Esophagus muscularis mucosa (tissue), 4 donors: ENCODE measurements at regions of chr5 and their contacts with region 1.

Region 1: GRCh38 chr5:139517683-139518564 is 35.4 kb upstream of the STING1 start:
- DNase-seq: peak; percentile 97
- H3K4me3 ChIP-seq: peak overlapping the region; percentile 51 to 67 (median 60)
- H3K27ac ChIP-seq: peak overlapping the region; percentile 84 to 87 (median 84)
- H3K4me1 ChIP-seq: peaks cover 7 to 21% (median 12%) of the 10 kb centered on the region in 4 donors
- H3K27me3 ChIP-seq: no peaks in the 10 kb centered on the region
- CTCF ChIP-seq: peak; percentile 95 to 97 (median 97)
- EP300 ChIP-seq: no peak
- POLR2A ChIP-seq: no peak

Region 2: GRCh38 chr5:139392678-139393496 is 125.0 kb before region 1 on chr5:
- intact Hi-C with region 1: no loop called
- DNase-seq: no peak
- H3K4me3 ChIP-seq: peak overlapping the region; percentile 58 to 63 (median 62)
- H3K27ac ChIP-seq: peak overlapping the region in 2 of 4 donors; percentile 79 to 84
- H3K4me1 ChIP-seq: peaks cover 57 to 77% (median 65%) of the 10 kb centered on the region in 4 donors
- H3K27me3 ChIP-seq: peaks cover 0 to 37% (median 6%) of the 10 kb centered on the region in 4 donors
- CTCF ChIP-seq: peak in 2 of 3 experiments; percentile 20 to 41
- EP300 ChIP-seq: no peak
- POLR2A ChIP-seq: no peak

Region 3: GRCh38 chr5:139422307-139422893 is 95.5 kb before region 1 on chr5:
- intact Hi-C with region 1: loop called (anchors 1 kb)
- DNase-seq: no peak
- H3K4me3 ChIP-seq: no peak overlapping the region
- H3K27ac ChIP-seq: no peak overlapping the region
- H3K4me1 ChIP-seq: peaks cover 24 to 33% (median 29%) of the 10 kb centered on the region in 4 donors
- H3K27me3 ChIP-seq: no peaks in the 10 kb centered on the region
- CTCF ChIP-seq: peak; percentile 73 to 91 (median 82)
- EP300 ChIP-seq: no peak
- POLR2A ChIP-seq: no peak

Region 4: GRCh38 chr5:139439013-139439903 is 78.7 kb before region 1 on chr5 and contains the start of gene DNAJC18:
- intact Hi-C with region 1: loop called (anchors 5 kb)
- DNase-seq: peak; percentile 97
- H3K4me3 ChIP-seq: peak within 1 kb of the TSS; percentile 73 to 87 (median 80)
- H3K27ac ChIP-seq: peak within 1 kb of the TSS; percentile 91 to 97 (median 94)
- H3K4me1 ChIP-seq: peaks cover 7 to 24% (median 17%) of the 10 kb centered on the region in 4 donors
- H3K27me3 ChIP-seq: no peaks in the 10 kb centered on the region
- CTCF ChIP-seq: peak in 1 of 3 experiments; percentile 7
- EP300 ChIP-seq: no peak
- POLR2A ChIP-seq: no peak
- total RNA-seq, gene DNAJC18: 8.3 to 15.4 (median 13.4) TPM

Region 5: DNA sequence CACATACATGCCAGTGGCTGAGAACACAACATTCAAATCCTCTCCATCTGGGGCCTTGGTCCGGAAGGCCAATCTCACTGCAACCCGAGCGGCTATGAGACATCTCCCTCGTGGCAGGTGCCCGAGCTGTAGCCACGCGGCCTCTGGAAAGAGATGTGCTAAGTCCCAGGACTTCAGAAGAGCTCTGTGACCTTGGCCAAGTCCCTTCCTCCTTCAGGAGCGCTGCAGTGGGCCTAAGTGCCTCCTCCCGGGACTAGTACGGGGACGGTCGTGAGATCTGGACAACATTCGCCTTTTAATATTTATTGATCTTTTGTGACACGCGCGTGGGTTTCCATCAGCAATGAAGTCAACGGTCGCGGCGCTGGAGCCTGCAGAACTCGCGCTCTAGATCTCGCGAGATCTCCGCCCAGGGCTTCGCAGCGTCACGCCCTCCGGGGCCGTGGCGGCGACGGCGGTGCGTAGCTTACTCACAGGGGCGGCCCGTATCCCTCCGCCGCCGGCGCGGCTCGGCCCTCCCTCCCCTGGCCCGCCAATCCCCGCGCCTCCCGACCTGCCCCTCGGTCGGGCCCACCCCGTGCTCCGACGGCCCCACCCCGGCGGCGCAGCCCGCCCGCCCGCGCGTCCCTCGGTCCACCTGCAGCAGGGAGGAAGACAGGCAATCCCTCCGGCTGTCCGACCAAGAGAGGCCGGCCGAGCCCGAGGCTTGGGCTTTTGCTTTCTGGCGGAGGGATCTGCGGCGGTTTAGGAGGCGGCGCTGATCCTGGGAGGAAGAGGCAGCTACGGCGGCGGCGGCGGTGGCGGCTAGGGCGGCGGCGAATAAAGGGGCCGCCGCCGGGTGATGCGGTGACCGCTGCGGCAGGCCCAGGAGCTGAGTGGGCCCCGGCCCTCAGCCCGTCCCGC is 43.1 kb after region 1 on chr5 and contains the start of gene UBE2D2:
- intact Hi-C with region 1: loop called (anchors 5 kb)
- DNase-seq: peak; percentile 99
- H3K4me3 ChIP-seq: peak within 1 kb of the TSS; percentile 75 to 99 (median 95)
- H3K27ac ChIP-seq: peak within 1 kb of the TSS; percentile 96 to 99 (median 98)
- H3K4me1 ChIP-seq: peaks cover 33 to 48% (median 45%) of the 10 kb centered on the region in 4 donors
- H3K27me3 ChIP-seq: no peaks in the 10 kb centered on the region
- CTCF ChIP-seq: no peak
- EP300 ChIP-seq: no peak
- POLR2A ChIP-seq: peak; percentile 67
- total RNA-seq, gene UBE2D2: 86.9 to 104 (median 91.5) TPM

Region 6: GRCh38 chr5:139745800-139746690 is 228.1 kb after region 1 on chr5:
- intact Hi-C with region 1: no loop called
- DNase-seq: peak; percentile 95
- H3K4me3 ChIP-seq: peak overlapping the region; percentile 51 to 63 (median 56)
- H3K27ac ChIP-seq: peak overlapping the region; percentile 34 to 71 (median 61)
- H3K4me1 ChIP-seq: peaks cover 35 to 39% (median 37%) of the 10 kb centered on the region in 4 donors
- H3K27me3 ChIP-seq: peaks cover 0 to 28% (median 13%) of the 10 kb centered on the region in 4 donors
- CTCF ChIP-seq: no peak
- EP300 ChIP-seq: no peak
- POLR2A ChIP-seq: no peak

Region 7: DNA sequence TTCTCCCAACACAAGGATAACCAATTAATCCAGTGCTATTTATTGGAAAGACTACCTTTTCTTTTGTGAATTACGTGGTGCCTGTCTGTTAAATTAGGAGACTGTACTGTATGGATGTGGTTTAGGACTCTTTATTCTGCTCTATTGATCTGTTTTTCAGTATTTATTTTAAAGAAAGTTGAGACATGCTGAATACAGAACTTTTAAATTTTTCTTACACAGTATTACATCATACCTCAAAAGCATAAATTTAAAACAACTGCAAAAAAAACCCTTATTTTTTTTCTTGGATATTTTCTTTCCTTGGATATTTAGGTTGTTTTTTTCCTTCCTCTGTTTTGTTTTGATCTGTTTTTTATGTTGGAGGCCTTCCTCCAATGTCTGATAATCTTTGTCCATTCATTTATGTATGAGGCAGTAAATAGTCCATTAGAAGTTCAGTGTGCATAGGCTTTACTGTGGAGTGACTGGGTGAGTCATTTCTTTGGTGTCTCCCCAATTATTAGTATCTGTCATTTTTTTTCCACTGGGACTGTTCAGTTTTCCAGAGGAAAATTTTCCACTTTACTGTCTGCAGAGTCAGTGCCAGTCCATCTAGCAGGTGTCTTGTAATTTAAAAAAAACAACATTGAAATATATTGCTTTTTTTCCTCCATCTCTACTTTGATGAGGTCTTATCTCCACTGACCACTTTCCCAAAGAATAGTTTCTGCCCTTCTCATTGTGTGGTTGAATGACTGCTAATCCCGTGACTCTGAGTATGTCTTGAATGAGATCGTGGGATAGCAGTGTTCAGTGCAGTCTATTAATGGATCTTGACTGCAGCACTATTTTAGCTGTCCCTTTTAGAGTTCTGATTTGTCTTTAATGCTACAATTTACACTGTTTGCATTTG is 672.3 kb after region 1 on chr5:
- intact Hi-C with region 1: no loop called
- DNase-seq: no peak
- H3K4me3 ChIP-seq: no peak overlapping the region
- H3K27ac ChIP-seq: peak overlapping the region; percentile 11 to 54 (median 26)
- H3K4me1 ChIP-seq: peaks cover 16 to 40% (median 35%) of the 10 kb centered on the region in 4 donors
- H3K27me3 ChIP-seq: no peaks in the 10 kb centered on the region
- CTCF ChIP-seq: no peak
- EP300 ChIP-seq: no peak
- POLR2A ChIP-seq: no peak